Tibial artery (tissue), 4 donors: ENCODE measurements at regions of chr6 and their contacts with region 1.

Region 1: GRCh38 chr6:108074359-108075144 is at the start of gene OSTM1:
- DNase-seq: peak; percentile 84 to 94
- H3K4me3 ChIP-seq: peak within 1 kb of the TSS; percentile 96 to 99
- H3K27ac ChIP-seq: peak within 1 kb of the TSS; percentile 77 to 81
- H3K4me1 ChIP-seq: peaks cover 0 to 23% (median 8%) of the 10 kb centered on the region in 4 donors
- H3K27me3 ChIP-seq: no peaks in the 10 kb centered on the region
- CTCF ChIP-seq: no peak

Region 2: DNA sequence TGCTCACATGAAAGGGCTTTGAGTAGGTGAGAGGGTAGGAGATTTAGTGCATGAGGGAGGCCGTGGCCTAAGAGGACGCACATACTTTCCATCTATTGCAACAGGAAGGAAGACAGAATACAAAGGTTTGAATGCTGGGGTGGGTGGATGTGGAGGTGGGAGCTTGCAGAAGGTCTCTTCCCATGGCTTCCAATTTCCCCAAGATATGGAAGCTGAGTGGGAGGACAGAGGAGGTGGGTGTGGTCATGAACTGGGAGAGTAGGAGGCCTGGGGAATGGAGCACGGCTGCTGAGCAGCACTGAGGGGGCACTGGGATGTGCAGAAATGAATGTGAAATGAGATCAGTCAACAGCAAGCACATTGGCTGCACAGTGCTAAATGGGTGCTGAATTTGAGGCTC is 320.8 kb before region 1 on chr6:
- intact Hi-C with region 1: no loop called
- DNase-seq: no peak
- H3K4me3 ChIP-seq: no peak overlapping the region
- H3K27ac ChIP-seq: no peak overlapping the region
- H3K4me1 ChIP-seq: no peaks in the 10 kb centered on the region
- H3K27me3 ChIP-seq: no peaks in the 10 kb centered on the region
- CTCF ChIP-seq: no peak

Region 3: DNA sequence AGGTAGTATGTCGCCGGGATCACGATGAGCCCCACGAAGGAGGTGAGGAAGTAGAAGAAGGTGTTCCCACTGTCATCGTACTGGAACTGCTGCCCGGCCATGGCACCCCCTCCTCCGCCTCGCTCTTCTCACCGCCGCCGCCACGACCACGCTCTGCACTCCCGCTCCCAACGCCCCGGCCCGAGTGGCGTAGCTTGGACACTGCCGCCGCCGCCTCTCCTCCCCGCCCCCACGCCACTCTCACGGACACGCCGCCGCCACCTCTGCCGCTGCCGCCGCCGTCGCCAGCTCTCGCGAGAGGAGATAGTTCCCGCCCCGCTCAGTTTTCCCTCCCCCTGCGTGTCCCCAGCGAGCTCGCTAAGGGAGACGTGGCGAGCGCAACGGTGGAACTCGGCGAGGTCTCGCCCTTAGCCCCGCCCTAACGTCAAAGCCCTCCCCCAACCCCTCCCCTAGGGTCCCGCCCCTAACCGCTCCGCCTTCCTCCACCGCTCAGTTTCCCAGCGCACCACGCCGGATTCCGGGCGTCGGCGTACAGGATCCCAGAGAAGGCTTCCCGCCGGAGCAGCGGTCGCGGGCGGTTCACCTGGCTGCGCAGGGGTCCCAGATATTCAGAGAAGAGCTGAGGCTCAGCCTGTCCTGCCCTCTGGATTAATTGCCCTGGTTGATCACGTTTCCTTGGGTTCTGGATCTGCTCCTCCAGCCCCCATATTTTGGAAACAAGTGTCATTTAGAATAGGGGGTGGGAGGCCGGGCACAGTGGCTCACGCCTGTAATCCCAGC is 116.5 kb before region 1 on chr6 and contains the start of gene SEC63:
- intact Hi-C with region 1: loop called (anchors 10 kb)
- DNase-seq: peak; percentile 95 to 98
- H3K4me3 ChIP-seq: peak within 1 kb of the TSS; percentile 68 to 89
- H3K27ac ChIP-seq: peak within 1 kb of the TSS; percentile 78 to 92
- H3K4me1 ChIP-seq: peaks cover 0 to 29% (median 19%) of the 10 kb centered on the region in 4 donors
- H3K27me3 ChIP-seq: no peaks in the 10 kb centered on the region
- CTCF ChIP-seq: no peak